Activated CD4-positive, alpha-beta T cell treated with anti-CD3 and anti-CD28 coated beads for 36 hours (primary cell): ENCODE measurements at regions of chr16 and their contacts with region 1.

Region 1: GRCh38 chr16:15874745-15875314 is 13.6 kb downstream of the CEP20 start:
- DNase-seq: peak; percentile 38
- ATAC-seq: no peak
- H3K4me3 Mint-ChIP-seq: no peak overlapping the region
- H3K27ac Mint-ChIP-seq: no peak overlapping the region
- H3K4me1 Mint-ChIP-seq: peaks cover 9% of the 10 kb centered on the region
- H3K27me3 Mint-ChIP-seq: no peaks in the 10 kb centered on the region

Region 2: DNA sequence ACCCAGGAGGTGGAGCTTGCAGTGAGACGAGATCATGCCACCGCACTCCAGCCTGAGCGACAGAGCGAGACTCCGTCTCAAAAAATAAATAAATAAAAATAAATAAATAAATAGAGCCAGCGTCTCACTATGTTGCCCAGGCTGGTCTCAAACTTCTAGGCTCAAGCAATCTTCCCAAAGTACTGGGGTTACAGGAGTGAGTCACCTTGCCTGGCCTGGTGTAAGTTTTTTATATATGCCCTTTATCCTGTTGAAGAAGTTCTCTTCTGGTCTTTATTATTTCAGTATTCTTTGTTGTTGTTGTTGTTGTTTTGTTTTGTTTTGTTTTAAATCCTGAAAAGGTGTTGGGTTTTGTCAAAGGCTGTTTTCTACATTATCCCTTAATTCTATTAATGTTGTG is 44.5 kb after region 1 on chr16:
- CTCF ChIA-PET with region 1: no interaction called
- POLR2A ChIA-PET with region 1: no interaction called
- intact Hi-C with region 1: loop called in 1 of 2 experiments (anchors 5 kb)
- DNase-seq: no peak
- ATAC-seq: no peak
- H3K4me3 Mint-ChIP-seq: no peak overlapping the region
- H3K27ac Mint-ChIP-seq: no peak overlapping the region
- H3K4me1 Mint-ChIP-seq: no peaks in the 10 kb centered on the region
- H3K27me3 Mint-ChIP-seq: no peaks in the 10 kb centered on the region